Lower lobe of right lung (tissue), 2 donors: ENCODE measurements at regions of chr6 and their contacts with region 1.

Region 1: DNA sequence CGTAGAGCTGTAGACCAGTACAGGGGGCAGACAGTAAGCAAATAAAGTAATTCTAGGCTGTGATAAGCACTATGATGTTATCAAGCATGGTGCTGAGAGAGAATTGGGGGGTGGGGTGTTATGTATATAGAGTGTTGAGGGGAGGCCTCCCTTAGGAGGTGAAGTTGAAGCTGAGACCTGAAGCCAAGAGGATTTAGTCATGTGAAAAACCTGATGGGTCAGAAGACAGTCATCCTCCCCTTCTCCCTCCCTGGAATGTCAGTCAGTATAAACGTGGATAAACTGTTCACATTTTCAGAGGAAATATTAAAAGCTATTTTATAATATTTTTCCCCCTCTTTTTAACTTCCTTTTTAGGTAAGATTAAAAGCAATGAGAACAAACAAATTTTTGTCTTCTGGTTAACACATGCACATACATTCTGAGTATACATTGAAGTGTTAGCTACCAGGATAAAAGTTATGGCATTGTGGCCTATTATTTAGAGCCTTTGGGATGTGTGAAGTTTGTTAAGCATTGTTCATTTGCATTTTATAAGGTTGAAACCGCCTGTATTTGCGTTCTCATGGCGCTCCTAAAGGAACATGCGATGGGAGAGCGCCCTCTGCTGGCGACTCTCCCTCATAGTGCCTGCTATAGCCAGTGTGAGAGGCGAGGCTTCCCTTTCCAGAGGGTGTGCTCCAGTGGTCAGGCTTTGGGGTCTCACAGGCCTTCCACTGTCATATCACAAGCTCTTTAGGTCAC is 35.4 kb upstream of the MAPK13 start:
- DNase-seq: peak; percentile 88
- ATAC-seq: peak; percentile 96 to 97
- H3K4me3 ChIP-seq: no peak overlapping the region
- H3K27ac ChIP-seq: no peak overlapping the region
- H3K4me1 ChIP-seq: peaks cover 9% of the 10 kb centered on the region
- H3K27me3 ChIP-seq: no peaks in the 10 kb centered on the region
- CTCF ChIP-seq: peak; percentile 93

Region 2: DNA sequence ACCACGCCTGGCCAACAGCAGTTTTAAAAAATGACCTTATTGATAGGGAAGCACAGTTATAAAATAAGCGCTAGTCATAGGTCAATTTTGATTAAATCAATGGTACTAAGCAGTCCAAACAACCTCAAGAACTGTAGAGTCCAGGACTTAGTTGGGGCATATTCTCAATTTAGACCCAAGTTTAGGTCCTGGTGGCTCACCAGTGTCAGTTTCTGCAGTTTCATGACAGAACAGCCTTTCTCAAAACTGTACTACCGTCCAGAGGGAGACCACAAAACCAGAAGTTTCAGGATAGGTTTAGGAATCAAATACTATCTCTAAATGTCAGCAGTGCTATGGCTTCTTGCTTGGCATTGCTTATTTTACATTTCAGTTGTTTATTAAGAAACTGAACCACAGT is 250.6 kb before region 1 on chr6:
- intact Hi-C with region 1: no loop called
- DNase-seq: no peak
- ATAC-seq: no peak
- H3K4me3 ChIP-seq: no peak overlapping the region
- H3K27ac ChIP-seq: no peak overlapping the region
- H3K4me1 ChIP-seq: no peaks in the 10 kb centered on the region
- H3K27me3 ChIP-seq: no peaks in the 10 kb centered on the region
- CTCF ChIP-seq: no peak

Region 3: DNA sequence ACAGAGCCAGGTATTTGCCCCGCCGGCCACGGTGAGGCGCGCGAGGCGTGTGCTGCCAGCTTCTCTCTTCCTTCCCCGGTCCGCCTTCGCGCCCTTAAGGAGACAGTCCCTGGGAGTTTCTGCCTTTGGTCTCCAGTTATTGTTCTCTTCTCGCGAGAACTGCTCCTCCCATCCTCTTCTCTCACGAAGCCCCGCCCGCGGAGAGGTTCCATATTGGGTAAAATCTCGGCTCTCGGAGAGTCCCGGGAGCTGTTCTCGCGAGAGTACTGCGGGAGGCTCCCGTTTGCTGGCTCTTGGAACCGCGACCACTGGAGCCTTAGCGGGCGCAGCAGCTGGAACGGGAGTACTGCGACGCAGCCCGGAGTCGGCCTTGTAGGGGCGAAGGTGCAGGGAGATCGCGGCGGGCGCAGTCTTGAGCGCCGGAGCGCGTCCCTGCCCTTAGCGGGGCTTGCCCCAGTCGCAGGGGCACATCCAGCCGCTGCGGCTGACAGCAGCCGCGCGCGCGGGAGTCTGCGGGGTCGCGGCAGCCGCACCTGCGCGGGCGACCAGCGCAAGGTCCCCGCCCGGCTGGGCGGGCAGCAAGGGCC is 67.3 kb before region 1 on chr6 and contains the start of gene MAPK14:
- intact Hi-C with region 1: loop called (anchors 5 kb)
- DNase-seq: peak; percentile 99
- ATAC-seq: peak; percentile 96 to 97
- H3K4me3 ChIP-seq: peak within 1 kb of the TSS; percentile 96
- H3K27ac ChIP-seq: peak within 1 kb of the TSS; percentile 96
- H3K4me1 ChIP-seq: peaks cover 30% of the 10 kb centered on the region
- H3K27me3 ChIP-seq: peaks cover 8% of the 10 kb centered on the region
- CTCF ChIP-seq: peak; percentile 90
- total RNA-seq, gene MAPK14: 67.9 TPM

Region 4: DNA sequence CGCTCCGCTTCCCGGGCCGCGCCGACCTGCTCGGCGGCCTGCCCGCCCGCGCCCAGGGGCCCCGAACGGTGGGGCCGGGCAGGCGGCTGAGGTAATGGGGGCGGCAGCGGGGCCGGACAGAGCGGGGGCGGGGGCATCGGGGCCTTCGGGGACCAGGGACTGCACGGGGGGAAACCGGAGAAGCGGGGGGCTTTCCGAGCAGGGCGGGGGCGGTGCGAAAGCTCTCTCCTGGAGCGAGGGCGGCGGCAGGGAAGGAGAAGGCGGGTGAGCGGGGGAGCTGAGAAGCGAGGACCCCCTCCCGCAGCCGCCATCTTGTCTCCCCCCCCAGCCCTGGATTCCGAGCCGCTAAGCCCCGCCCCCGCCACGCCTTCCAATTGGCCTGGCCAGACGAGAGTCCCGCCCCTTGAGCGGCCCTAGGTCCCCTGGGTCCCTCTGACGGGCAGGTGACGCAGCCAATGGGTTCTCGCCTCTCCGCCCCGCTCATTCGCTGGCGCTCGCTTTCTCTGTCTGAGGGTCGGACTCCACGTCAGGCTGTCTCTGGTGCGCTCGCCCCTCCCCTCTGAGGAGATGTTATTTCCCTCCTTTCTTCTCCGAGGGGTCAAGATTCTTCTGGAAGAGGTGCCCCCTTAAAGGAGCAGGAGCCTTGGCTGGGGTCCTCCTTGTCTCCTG is 102.1 kb after region 1 on chr6:
- intact Hi-C with region 1: no loop called
- DNase-seq: peak; percentile 100
- ATAC-seq: peak; percentile 98
- H3K4me3 ChIP-seq: peak overlapping the region; percentile 66
- H3K27ac ChIP-seq: peak overlapping the region; percentile 94
- H3K4me1 ChIP-seq: peaks cover 21% of the 10 kb centered on the region
- H3K27me3 ChIP-seq: no peaks in the 10 kb centered on the region
- CTCF ChIP-seq: no peak